ENCODE measurements at regions of chr4 and their contacts with region 1.

Region 1: DNA sequence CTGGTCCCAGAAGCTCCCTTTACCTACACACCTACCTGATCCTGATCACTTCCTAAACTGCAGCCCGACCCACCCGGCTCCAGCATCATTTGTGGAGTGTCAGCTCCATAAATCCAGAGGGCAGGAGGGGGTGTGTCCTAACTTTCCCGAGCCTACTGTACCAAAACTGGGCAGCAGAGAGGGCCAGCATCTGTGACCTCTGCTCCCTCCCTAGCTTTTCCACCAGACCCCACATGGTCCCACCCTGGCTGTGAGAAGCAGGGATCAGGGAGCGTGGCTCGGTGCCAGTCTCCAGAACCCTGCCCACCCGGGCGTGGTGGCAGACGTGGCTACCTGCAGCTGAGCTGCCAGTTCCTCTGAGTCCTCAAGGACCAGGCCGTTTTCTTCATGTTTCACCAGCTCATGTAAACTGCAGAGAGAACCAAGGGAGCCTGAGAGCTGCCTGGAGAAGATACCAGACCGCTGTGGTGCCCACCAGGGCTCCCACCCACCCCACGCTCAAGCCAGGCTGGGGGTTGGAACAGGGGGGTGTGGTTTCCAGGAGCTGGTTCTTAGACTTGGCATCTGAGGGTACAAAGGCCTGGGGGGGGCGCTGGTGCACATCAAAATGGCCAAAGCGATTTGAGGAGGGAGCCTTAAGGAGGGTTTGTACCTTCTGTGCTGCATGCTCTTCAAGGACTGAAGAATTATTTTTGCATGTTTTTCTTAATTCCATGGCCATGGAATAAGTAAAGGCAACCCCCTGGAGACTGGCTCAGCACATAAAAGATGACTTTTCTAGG is 76.7 kb upstream of the DRD5 start:
- DNase-seq: no peak
- ATAC-seq: no peak
- H3K4me3 ChIP-seq: no peak overlapping the region
- H3K27ac ChIP-seq: no peak overlapping the region
- H3K4me1 ChIP-seq: no peaks in the 10 kb centered on the region
- H3K27me3 ChIP-seq: no peaks in the 10 kb centered on the region
- CTCF ChIP-seq: no peak
- EP300 ChIP-seq: no peak
- POLR2A ChIP-seq: no peak
- RAD21 ChIP-seq: no peak

Region 2: DNA sequence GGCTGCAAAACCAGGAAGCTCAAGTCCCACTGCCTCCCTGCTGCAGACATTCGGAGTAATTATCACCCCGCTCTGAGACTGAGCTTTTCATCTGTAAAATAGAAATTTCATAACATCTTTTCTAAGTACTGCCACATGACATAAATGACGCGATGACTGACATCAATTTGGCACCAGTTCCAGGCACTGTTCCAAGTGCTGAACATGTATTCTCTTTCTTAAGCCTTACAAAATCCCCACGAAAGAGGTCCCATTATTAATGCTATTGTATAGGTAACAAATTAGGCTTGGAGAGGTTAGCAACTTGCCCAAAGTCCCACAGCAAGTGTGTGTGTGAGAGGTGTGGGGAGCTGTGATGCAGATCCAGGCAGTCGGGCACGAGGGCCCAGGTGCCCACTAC is 260.1 kb after region 1 on chr4:
- CTCF ChIA-PET with region 1: no interaction called
- POLR2A ChIA-PET with region 1: no interaction called
- in situ Hi-C with region 1: no loop called
- intact Hi-C with region 1: no loop called
- DNase-seq: no peak
- ATAC-seq: no peak
- H3K4me3 ChIP-seq: no peak overlapping the region
- H3K27ac ChIP-seq: no peak overlapping the region
- H3K4me1 ChIP-seq: peaks cover 26% of the 10 kb centered on the region
- H3K27me3 ChIP-seq: no peaks in the 10 kb centered on the region
- CTCF ChIP-seq: no peak
- EP300 ChIP-seq: no peak
- POLR2A ChIP-seq: no peak
- RAD21 ChIP-seq: no peak

Region 3: GRCh38 chr4:10063544-10064300 is 359.0 kb after region 1 on chr4:
- CTCF ChIA-PET with region 1: no interaction called
- POLR2A ChIA-PET with region 1: no interaction called
- in situ Hi-C with region 1: no loop called
- intact Hi-C with region 1: loop called (anchors 5 kb)
- DNase-seq: peak; percentile 67
- ATAC-seq: peak; percentile 99
- H3K4me3 ChIP-seq: no peak overlapping the region
- H3K27ac ChIP-seq: no peak overlapping the region
- H3K4me1 ChIP-seq: peaks cover 23% of the 10 kb centered on the region
- H3K27me3 ChIP-seq: no peaks in the 10 kb centered on the region
- CTCF ChIP-seq: peak; percentile 96
- EP300 ChIP-seq: no peak
- POLR2A ChIP-seq: no peak
- RAD21 ChIP-seq: peak; percentile 97

Measured in HepG2 (cell line).